ENCODE measurements at regions of chr9 and their contacts with region 1.

Region 1: GRCh38 chr9:6667633-6668280 is 22.2 kb upstream of the GLDC start:
- DNase-seq: no peak
- ATAC-seq: peak; percentile 77
- H3K4me3 ChIP-seq: no peak overlapping the region
- H3K27ac ChIP-seq: no peak overlapping the region
- H3K4me1 ChIP-seq: no peaks in the 10 kb centered on the region; the same call in 1 of the 2 replicates
- H3K27me3 ChIP-seq: no peaks in the 10 kb centered on the region
- CTCF ChIP-seq: peak; percentile 30 to 64 (median 64); a peak in 5 of 6 replicates
- EP300 ChIP-seq: no peak
- POLR2A ChIP-seq: no peak
- RAD21 ChIP-seq: peak; percentile 75

Region 2: GRCh38 chr9:6575324-6576034 is 92.3 kb before region 1 on chr9:
- CTCF ChIA-PET with region 1: interaction called, 24 read pairs
- POLR2A ChIA-PET with region 1: interaction called, 3 read pairs
- RAD21 ChIA-PET with region 1: interaction called, 6 read pairs
- SMC1A ChIA-PET with region 1: interaction called, 9 read pairs
- in situ Hi-C with region 1: no loop called
- intact Hi-C with region 1: no loop called
- DNase-seq: peak; percentile 53
- ATAC-seq: peak; percentile 95
- H3K4me3 ChIP-seq: no peak overlapping the region
- H3K27ac ChIP-seq: peak overlapping the region; percentile 4; the same call in 1 of the 2 replicates
- H3K4me1 ChIP-seq: peaks cover 18% of the 10 kb centered on the region
- H3K27me3 ChIP-seq: no peaks in the 10 kb centered on the region
- CTCF ChIP-seq: no peak
- EP300 ChIP-seq: no peak
- POLR2A ChIP-seq: no peak
- RAD21 ChIP-seq: no peak

Region 3: GRCh38 chr9:6590334-6590733 is 77.4 kb before region 1 on chr9:
- CTCF ChIA-PET with region 1: interaction called, 64 read pairs
- POLR2A ChIA-PET with region 1: interaction called, 3 read pairs
- RAD21 ChIA-PET with region 1: interaction called, 29 read pairs
- SMC1A ChIA-PET with region 1: interaction called, 63 read pairs
- in situ Hi-C with region 1: loop called (anchors 5 kb)
- intact Hi-C with region 1: loop called (anchors 1 kb)
- DNase-seq: no peak
- ATAC-seq: no peak
- H3K4me3 ChIP-seq: no peak overlapping the region
- H3K27ac ChIP-seq: no peak overlapping the region
- H3K4me1 ChIP-seq: no peaks in the 10 kb centered on the region
- H3K27me3 ChIP-seq: no peaks in the 10 kb centered on the region
- CTCF ChIP-seq: no peak
- EP300 ChIP-seq: no peak
- POLR2A ChIP-seq: no peak
- RAD21 ChIP-seq: no peak

Region 4: DNA sequence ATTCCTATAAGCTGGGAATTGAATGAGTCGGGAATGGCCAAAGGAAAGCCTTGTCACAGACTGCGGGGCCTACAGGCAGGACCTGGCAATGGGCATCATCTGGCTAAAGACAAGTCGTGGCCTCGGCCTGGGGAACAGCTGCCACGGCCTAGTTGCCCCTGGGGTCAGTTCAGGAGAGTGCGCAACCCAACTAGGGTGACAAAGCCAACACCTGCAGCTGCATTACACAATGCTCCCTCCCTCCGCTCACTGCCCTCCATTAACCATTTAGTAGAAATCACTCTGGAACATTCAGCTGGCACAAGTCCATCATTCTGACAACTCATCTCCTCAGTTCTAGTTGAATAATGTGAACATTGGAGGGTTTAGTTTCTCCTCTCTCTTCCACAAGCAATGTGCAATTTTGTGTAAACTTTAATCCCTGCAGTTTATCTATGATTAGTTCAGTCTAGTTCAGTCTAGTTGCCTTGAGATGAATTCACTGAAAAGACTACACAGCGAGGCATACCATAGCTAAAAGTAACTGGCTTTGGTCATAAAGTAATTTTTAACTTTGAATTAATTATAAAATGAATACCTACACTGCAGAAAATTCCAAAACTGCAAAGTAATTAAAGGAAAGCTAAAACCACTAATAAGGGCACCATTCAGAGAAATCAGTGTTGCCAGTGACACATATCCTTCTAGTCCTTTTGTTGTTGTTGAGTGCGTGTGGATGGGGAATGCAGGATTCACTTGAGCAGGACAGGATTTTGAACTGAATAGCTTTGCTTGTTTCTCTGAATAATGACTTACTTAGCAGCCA is 27.3 kb before region 1 on chr9:
- CTCF ChIA-PET with region 1: interaction called, 21 read pairs
- POLR2A ChIA-PET with region 1: interaction called, 8 read pairs
- RAD21 ChIA-PET with region 1: interaction called, 19 read pairs
- SMC1A ChIA-PET with region 1: interaction called, 14 read pairs
- in situ Hi-C with region 1: no loop called
- intact Hi-C with region 1: no loop called
- DNase-seq: no peak
- ATAC-seq: no peak
- H3K4me3 ChIP-seq: no peak overlapping the region
- H3K27ac ChIP-seq: no peak overlapping the region
- H3K4me1 ChIP-seq: peaks cover 7% of the 10 kb centered on the region; the same call in 1 of the 2 replicates
- H3K27me3 ChIP-seq: no peaks in the 10 kb centered on the region
- CTCF ChIP-seq: no peak
- EP300 ChIP-seq: no peak
- POLR2A ChIP-seq: no peak
- RAD21 ChIP-seq: no peak

Region 5: DNA sequence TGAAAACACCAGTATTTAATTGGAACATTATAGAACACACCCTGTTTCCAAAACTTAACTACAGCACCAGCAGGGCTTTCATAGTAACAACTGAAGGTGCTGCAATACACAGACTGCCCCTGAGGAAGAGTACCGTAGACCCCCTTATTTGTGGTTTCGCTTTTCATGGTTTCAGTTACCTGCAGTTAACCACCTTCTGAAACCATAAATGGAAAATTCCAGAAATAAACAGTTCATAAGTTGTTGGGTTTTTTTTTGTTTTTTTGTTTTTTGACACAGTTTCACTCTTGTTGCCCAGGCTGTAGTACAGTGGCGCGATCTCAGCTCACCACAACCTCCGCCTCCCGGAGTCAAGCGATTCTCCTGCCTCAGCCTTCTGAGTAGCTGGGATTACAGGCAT is 12.7 kb before region 1 on chr9:
- CTCF ChIA-PET with region 1: interaction called, 22 read pairs
- POLR2A ChIA-PET with region 1: interaction called, 8 read pairs
- RAD21 ChIA-PET with region 1: interaction called, 5 read pairs
- SMC1A ChIA-PET with region 1: interaction called, 18 read pairs
- in situ Hi-C with region 1: no loop called
- intact Hi-C with region 1: no loop called
- DNase-seq: peak; percentile 84
- ATAC-seq: peak; percentile 91
- H3K4me3 ChIP-seq: peak overlapping the region; percentile 21; the same call in 1 of the 2 replicates
- H3K27ac ChIP-seq: peak overlapping the region; percentile 49
- H3K4me1 ChIP-seq: peaks cover 29% of the 10 kb centered on the region
- H3K27me3 ChIP-seq: no peaks in the 10 kb centered on the region
- CTCF ChIP-seq: no peak
- EP300 ChIP-seq: peak; percentile 68 to 77; a peak in 3 of 4 replicates
- POLR2A ChIP-seq: no peak
- RAD21 ChIP-seq: 0 out of 2 replicates have a peak, but pooled peaks have one; percentile 8